Aorta (tissue), 5 donors: ENCODE measurements at regions of chr7 and their contacts with region 1.

Region 1: GRCh38 chr7:135795846-135796570 is 47.4 kb upstream of the FAM180A start:
- DNase-seq: no peak
- ATAC-seq: peak; percentile 19
- H3K4me3 ChIP-seq: no peak overlapping the region
- H3K27ac ChIP-seq: peak overlapping the region; percentile 93 to 97
- H3K4me1 ChIP-seq: peaks cover 0 to 2% of the 10 kb centered on the region in 2 donors
- H3K27me3 ChIP-seq: no peaks in the 10 kb centered on the region

Region 2: GRCh38 chr7:135662373-135663114 is 133.5 kb before region 1 on chr7 and contains the start of gene STMP1:
- intact Hi-C with region 1: loop called in 1 of 2 experiments (anchors 5 kb)
- DNase-seq: peak; percentile 98 to 99
- ATAC-seq: peak; percentile 100
- H3K4me3 ChIP-seq: peak within 1 kb of the TSS; percentile 82 to 92
- H3K27ac ChIP-seq: peak within 1 kb of the TSS; percentile 25 to 97
- H3K4me1 ChIP-seq: peaks cover 0 to 3% of the 10 kb centered on the region in 2 donors
- H3K27me3 ChIP-seq: no peaks in the 10 kb centered on the region
- total RNA-seq, gene STMP1: 29.8 to 42.6 TPM

Region 3: DNA sequence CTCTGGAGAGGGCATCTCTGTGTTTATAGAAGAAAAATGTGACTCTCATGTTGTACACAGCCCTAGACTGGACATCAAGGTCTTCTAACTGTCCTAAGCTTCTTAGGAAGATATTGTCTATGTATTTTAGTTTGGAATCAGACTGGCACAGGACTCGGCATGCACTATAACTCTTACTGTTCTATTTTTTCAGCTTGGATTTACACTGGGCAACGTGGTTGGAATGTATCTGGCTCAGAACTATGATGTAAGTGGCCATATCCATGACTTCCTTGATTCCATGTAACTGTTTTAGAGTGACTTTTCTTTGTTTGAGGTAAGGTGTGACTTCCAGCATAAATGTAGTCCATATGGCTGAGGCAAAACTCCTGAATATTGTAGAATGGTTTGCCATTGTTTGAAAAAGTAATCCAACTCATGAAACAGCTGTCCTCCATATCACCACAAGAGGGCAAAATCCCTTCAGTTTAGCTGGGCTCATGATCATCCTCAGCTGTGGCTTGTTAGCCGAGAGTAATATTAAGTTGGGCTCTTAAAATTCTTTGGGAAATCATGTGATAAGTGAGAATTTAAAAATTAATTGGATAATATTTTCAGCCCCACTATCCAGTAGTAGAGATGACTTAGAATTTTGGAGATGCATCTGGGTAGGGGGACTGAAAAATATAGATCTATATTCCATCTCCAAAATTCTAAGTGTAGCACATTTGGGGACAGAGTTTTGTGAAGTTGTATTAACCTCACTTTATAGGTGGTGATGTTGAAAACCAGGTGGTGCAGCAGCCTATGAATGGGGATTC is 123.2 kb before region 1 on chr7:
- intact Hi-C with region 1: loop called in 1 of 2 experiments (anchors 5 kb)
- DNase-seq: no peak
- ATAC-seq: peak; percentile 88
- H3K4me3 ChIP-seq: no peak overlapping the region
- H3K27ac ChIP-seq: peak overlapping the region in 1 of 2 donors; percentile 12
- H3K4me1 ChIP-seq: peaks cover 1 to 9% of the 10 kb centered on the region in 2 donors
- H3K27me3 ChIP-seq: no peaks in the 10 kb centered on the region

Region 4: GRCh38 chr7:135678612-135679575 is 117.1 kb before region 1 on chr7:
- intact Hi-C with region 1: loop called (anchors 2 to 5 kb)
- DNase-seq: peak; percentile 84 to 87
- ATAC-seq: no peak
- H3K4me3 ChIP-seq: no peak overlapping the region
- H3K27ac ChIP-seq: peak overlapping the region in 1 of 2 donors; percentile 76
- H3K4me1 ChIP-seq: peaks cover 0 to 3% of the 10 kb centered on the region in 2 donors
- H3K27me3 ChIP-seq: no peaks in the 10 kb centered on the region

Region 5: DNA sequence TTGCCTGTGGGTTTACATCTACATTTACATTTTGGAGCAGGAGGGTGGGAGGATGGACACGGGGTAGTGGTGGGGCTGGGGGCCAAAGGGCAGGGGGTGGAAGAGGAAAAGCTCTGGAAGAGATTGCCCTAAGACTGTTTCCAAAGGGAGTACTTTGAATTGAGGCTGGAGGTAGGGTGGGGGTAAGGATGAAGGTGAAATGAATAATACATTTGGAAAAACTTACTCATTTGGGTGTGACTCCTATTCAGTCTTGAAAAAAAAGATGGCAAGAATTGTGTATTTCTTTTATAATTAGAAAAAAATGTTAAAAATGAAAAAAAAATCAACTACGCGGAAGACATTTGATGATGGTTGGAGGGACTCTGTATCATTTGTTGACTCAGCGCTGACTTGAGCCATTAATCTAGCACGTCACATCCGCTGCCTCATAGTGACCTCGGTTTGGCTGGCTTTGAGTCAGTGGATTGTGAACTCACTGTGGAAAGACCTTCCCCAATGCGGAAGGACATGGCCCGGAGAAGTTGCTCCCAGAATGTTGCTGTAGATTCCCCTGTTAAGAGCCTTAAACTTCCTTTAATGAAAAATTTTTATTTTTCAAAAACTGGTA is 50.2 kb before region 1 on chr7:
- intact Hi-C with region 1: loop called (anchors 5 to 10 kb)
- DNase-seq: peak; percentile 86 to 89
- ATAC-seq: peak; percentile 89
- H3K4me3 ChIP-seq: no peak overlapping the region
- H3K27ac ChIP-seq: peak overlapping the region; percentile 73 to 92
- H3K4me1 ChIP-seq: no peaks in the 10 kb centered on the region
- H3K27me3 ChIP-seq: no peaks in the 10 kb centered on the region

Region 6: GRCh38 chr7:135761751-135762488 is 34.1 kb before region 1 on chr7:
- intact Hi-C with region 1: loop called in 1 of 2 experiments (anchors 5 kb)
- DNase-seq: peak; percentile 83 to 89
- ATAC-seq: peak; percentile 68
- H3K4me3 ChIP-seq: no peak overlapping the region
- H3K27ac ChIP-seq: peak overlapping the region; percentile 92 to 100
- H3K4me1 ChIP-seq: peaks cover 3 to 19% of the 10 kb centered on the region in 2 donors
- H3K27me3 ChIP-seq: no peaks in the 10 kb centered on the region

Region 7: GRCh38 chr7:135925210-135925609 is 129.2 kb after region 1 on chr7:
- intact Hi-C with region 1: no loop called
- DNase-seq: no peak
- ATAC-seq: no peak
- H3K4me3 ChIP-seq: no peak overlapping the region
- H3K27ac ChIP-seq: no peak overlapping the region
- H3K4me1 ChIP-seq: no peaks in the 10 kb centered on the region
- H3K27me3 ChIP-seq: no peaks in the 10 kb centered on the region

Region 8: GRCh38 chr7:136086712-136087111 is 290.7 kb after region 1 on chr7:
- intact Hi-C with region 1: no loop called
- DNase-seq: peak in 1 of 2 donors; percentile 52
- ATAC-seq: peak; percentile 91
- H3K4me3 ChIP-seq: peak overlapping the region; percentile 34 to 69
- H3K27ac ChIP-seq: no peak overlapping the region
- H3K4me1 ChIP-seq: no peaks in the 10 kb centered on the region
- H3K27me3 ChIP-seq: peaks cover 0 to 1% of the 10 kb centered on the region in 2 donors